ENCODE measurements at regions of chr20 and their contacts with region 1.

Region 1: DNA sequence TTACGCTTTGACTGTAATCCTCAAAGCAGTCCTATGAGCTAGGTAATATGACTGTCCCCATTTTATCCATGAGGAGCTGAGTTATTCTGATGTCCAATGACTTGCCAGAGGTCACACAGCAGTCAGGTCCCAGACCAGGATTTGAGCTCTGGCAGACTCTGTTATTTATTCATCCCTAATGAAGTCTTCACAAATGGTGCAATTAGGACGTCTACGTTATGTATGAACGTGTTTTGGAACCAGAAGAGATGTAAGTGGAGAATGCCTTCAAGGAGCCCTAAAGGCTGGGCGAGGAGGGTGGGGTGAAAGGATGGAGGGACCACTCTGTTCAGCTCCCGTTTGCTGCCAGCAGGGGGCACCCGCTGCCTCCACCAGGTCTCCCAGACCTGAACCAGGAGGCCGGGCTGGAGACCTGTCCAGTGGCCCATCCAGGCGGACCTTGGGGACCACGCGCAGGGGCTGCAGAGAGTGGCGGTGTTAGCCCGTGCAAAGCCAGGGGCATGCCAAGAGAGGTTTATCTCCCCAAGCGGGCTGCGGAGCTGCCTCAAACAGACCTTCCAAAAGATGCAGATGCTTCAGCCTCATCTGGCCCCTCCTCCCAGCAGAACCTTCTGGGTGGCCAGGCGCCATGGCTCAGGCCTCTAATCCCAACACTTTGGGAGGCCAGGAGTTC is 15.2 kb upstream of the ZNF335 start:
- DNase-seq: peak; percentile 85 to 90 (median 87)
- ATAC-seq: peak; percentile 94
- H3K4me3 ChIP-seq: no peak overlapping the region
- H3K27ac ChIP-seq: no peak overlapping the region
- H3K4me1 ChIP-seq: peaks cover 20 to 23% of the 10 kb centered on the region in 2 experiments
- H3K27me3 ChIP-seq: no peaks in the 10 kb centered on the region
- CTCF ChIP-seq: peak; percentile 88 to 97 (median 91)
- EP300 ChIP-seq: no peak
- POLR2A ChIP-seq: no peak
- RAD21 ChIP-seq: peak; percentile 57 to 76

Region 2: GRCh38 chr20:45924391-45925261 is 62.6 kb before region 1 on chr20:
- CTCF ChIA-PET with region 1: no interaction called
- POLR2A ChIA-PET with region 1: no interaction called
- in situ Hi-C with region 1: no loop called
- intact Hi-C with region 1: no loop called
- DNase-seq: no peak
- ATAC-seq: no peak
- H3K4me3 ChIP-seq: no peak overlapping the region
- H3K27ac ChIP-seq: no peak overlapping the region
- H3K4me1 ChIP-seq: peaks cover 6 to 10% of the 10 kb centered on the region in 2 experiments; a peak in 4 of 5 replicates
- H3K27me3 ChIP-seq: no peaks in the 10 kb centered on the region; a peak in 1 of 5 replicates
- CTCF ChIP-seq: no peak
- EP300 ChIP-seq: no peak
- POLR2A ChIP-seq: no peak
- RAD21 ChIP-seq: no peak

Region 3: DNA sequence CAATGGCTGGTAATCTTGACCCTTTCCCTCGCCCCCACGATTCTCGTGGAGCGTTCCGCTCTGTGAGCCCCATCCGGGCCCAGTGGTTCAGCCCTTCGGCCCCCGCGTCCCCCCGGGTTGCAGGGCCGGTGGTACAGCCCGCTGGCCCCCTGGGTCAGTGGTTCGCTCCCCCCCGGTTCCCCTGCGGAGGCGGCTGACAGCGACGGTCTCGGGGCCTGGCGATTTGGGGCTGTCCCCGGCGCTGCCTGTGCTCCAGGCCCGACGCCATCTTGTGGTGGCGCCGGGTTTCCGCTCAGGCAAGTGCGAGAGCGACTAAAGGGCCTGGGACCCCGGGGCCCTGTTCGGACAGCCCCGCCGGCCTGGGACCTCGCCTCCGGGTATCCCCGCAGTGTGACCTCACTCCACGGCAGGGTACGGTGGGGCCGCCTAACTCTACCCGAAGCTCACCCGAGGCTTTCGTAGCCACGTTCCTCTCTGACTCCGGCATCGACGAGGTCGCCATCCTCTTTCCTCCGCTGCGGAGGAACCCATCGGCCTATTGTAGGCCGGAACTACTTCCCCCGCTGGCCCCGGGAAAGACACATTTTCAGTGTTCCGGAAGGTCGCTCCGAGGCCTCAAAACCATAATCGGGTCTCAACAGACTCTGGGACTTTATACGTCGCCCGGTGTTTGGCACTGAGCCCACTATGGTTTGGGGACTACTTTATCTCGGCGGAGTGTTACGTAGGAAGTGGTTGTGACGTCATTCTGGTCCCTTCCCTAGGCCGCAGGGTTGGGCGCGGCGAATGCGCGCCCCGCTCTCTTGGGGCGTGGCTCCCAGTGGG is 15.4 kb before region 1 on chr20 and contains the start of gene ZNF335:
- CTCF ChIA-PET with region 1: interaction called, 4 read pairs
- POLR2A ChIA-PET with region 1: interaction called, 32 read pairs
- in situ Hi-C with region 1: no loop called
- intact Hi-C with region 1: loop called (anchors 1 kb)
- DNase-seq: peak; percentile 98 to 99 (median 99)
- ATAC-seq: peak; percentile 82
- H3K4me3 ChIP-seq: peak within 1 kb of the TSS; percentile 82
- H3K27ac ChIP-seq: peak within 1 kb of the TSS; percentile 100
- H3K4me1 ChIP-seq: peaks cover 9 to 36% of the 10 kb centered on the region in 2 experiments; a peak in 4 of 5 replicates
- H3K27me3 ChIP-seq: no peaks in the 10 kb centered on the region
- CTCF ChIP-seq: peak in 1 of 3 experiments; percentile 26; a peak in 2 of 6 replicates
- EP300 ChIP-seq: peak; percentile 12; the same call in 1 of the 2 replicates
- POLR2A ChIP-seq: peak; percentile 71; the same call in 1 of the 2 replicates
- RAD21 ChIP-seq: no peak; a peak in 1 of 4 replicates
- polyA plus RNA-seq, gene ZNF335: 0.39 to 0.50 TPM

Measured in K562 (cell line).